Activated CD8-positive, alpha-beta T cell treated with anti-CD3 and anti-CD28 coated beads, Interleukin-2, amount 10 ng/mL, durations not matched to agents 7 days and 5 days (primary cell): ENCODE measurements at regions of chrX and their contacts with region 1.

Region 1: GRCh38 chrX:56729152-56729850 is at the start of gene NBDY:
- DNase-seq: peak; percentile 40
- ATAC-seq: peak; percentile 83
- H3K4me3 Mint-ChIP-seq: peak within 1 kb of the TSS; percentile 79
- H3K27ac Mint-ChIP-seq: peak within 1 kb of the TSS; percentile 84
- H3K4me1 Mint-ChIP-seq: peaks cover 23% of the 10 kb centered on the region
- H3K27me3 Mint-ChIP-seq: no peaks in the 10 kb centered on the region
- total RNA-seq, gene NBDY: 28.6 to 31.2 TPM

Region 2: GRCh38 chrX:56281789-56282188 is 447.5 kb before region 1 on chrX:
- CTCF ChIA-PET with region 1: interaction called, 82 read pairs
- POLR2A ChIA-PET with region 1: no interaction called
- DNase-seq: peak; percentile 42
- ATAC-seq: no peak
- H3K4me3 Mint-ChIP-seq: no peak overlapping the region
- H3K27ac Mint-ChIP-seq: no peak overlapping the region
- H3K4me1 Mint-ChIP-seq: peaks cover 9% of the 10 kb centered on the region
- H3K27me3 Mint-ChIP-seq: no peaks in the 10 kb centered on the region

Region 3: DNA sequence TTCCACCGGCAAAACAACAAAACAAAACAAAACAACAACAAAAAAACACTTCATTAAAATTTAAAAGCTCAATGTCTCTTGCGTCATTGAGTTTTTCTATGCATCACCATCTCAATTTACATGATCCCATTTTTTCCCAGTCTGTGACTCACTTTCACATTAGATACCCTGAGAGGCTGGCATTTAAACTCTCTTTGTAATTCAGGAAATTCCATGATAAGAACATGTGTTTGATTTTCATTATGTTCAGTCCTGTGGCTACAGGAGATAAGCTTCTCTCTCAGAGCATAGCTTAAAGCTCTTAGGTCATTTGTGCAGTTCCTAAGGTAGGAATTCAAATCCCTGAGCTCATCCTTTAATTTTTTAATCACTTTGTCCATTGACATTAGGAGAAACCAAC is 104.3 kb after region 1 on chrX:
- CTCF ChIA-PET with region 1: no interaction called
- POLR2A ChIA-PET with region 1: no interaction called
- DNase-seq: no peak
- ATAC-seq: no peak
- H3K4me3 Mint-ChIP-seq: no peak overlapping the region
- H3K27ac Mint-ChIP-seq: no peak overlapping the region
- H3K4me1 Mint-ChIP-seq: no peaks in the 10 kb centered on the region
- H3K27me3 Mint-ChIP-seq: no peaks in the 10 kb centered on the region